ENCODE measurements at regions of chr17 and their contacts with region 1.

Region 1: DNA sequence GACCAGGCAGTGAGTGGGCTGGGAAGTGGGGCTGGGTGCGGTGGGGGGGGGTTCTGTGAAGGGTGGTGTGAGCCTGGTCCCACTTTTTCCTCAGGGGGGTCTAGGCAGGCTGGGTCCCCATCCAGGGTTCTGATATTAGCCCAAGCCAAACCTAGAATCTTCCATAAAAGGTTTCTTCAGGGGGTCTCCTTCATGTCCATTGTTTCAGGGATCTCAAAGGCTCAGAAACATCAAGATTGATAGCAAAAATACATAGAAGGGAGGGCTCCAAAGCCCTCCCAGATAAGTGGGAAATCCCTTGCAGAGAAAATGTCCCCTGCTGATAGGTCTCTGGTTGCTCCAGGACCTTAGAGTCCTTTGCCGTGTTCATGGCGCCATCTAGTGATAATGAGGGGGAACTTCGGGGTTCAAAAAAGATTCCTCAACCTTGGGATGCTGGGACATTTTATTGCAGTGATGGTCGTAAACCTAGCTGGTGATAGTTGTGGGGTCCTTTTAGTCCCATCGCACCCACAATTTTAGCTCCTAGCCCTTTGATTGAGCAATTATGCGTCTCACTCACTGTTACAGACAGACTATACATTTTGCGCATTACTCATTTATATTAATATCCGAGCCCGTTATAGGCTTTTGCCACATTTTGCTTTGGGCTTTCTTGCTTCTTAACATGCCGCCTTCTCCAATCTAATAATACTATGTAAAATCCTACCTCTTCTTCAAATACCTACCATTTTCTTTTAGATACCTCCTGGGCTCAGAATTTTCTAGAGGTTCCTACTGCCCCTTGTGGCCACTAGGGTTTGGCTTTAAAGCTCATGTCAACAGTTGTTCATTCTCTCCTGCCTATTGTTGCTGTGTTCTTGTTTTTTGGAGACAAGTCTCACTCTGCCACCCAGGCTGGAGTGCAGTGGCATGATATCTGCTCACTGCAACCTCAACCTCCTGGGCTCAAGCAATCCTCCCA is 35.1 kb downstream of the IGF2BP1 start:
- DNase-seq: peak in 1 of 2 donors; percentile 33
- ATAC-seq: peak in 7 of 8 donors; percentile 53 to 74 (median 67)
- H3K4me3 ChIP-seq: no peak overlapping the region
- H3K27ac ChIP-seq: no peak overlapping the region
- H3K4me1 ChIP-seq: peaks cover 0 to 10% (median 0%) of the 10 kb centered on the region in 9 donors
- H3K27me3 ChIP-seq: peaks cover 0 to 44% (median 29%) of the 10 kb centered on the region in 7 donors
- CTCF ChIP-seq: peak; percentile 58 to 82 (median 74)

Region 2: DNA sequence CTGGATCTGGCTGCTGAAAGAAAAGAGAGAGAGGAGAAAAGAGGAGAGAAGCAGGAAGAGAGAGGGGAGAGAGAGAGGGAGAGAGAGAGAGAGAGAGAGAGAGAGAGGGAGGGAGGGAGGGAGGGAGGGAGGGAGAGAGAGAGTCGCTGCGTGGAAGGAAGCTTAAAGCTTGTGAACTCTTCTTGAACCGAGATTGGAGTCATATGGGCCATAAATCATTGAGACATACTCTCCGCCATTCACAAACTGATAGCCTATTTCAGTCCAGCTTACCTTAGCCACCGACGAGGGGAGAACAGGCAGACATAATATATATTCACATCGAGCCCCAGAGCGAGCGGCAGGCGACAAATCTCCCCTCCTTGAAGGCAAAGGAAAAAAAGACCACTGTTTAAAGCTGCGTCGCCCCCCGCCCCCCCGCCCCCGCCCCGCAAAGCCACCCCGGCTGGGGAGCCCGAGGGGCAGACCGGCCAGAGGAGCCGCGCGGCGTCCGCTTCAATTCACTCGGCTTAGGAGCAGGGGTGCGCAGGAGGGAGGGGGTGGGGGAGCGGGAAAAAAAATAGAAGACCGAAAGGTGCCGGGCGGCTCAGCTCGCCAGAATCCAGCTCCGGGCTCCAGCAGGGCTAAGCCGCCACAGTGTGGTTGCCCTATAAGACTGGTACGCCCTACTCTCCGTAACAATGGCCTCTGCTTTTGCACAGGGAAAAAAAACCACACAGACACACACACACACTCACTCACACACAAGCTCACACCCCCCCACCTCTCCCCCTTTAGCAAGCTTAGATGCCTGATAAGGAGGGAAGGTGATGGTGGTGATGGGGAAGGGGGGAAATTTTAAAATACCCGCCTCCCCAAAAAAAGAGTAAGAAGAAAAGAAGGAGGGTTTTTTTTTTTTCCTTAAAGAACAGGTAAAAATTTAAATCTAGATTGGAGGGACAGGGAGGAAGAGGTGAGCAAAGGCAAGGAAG is 476.7 kb before region 1 on chr17:
- intact Hi-C with region 1: no loop called
- DNase-seq: no peak
- ATAC-seq: peak in 2 of 8 donors; percentile 13 to 47
- H3K4me3 ChIP-seq: peak overlapping the region in 9 of 10 donors; percentile 25 to 54 (median 43)
- H3K27ac ChIP-seq: peak overlapping the region in 6 of 10 donors; percentile 21 to 64 (median 50)
- H3K4me1 ChIP-seq: peaks cover 0 to 26% (median 0%) of the 10 kb centered on the region in 9 donors
- H3K27me3 ChIP-seq: peaks cover 0 to 100% (median 93%) of the 10 kb centered on the region in 7 donors
- CTCF ChIP-seq: no peak

Region 3: DNA sequence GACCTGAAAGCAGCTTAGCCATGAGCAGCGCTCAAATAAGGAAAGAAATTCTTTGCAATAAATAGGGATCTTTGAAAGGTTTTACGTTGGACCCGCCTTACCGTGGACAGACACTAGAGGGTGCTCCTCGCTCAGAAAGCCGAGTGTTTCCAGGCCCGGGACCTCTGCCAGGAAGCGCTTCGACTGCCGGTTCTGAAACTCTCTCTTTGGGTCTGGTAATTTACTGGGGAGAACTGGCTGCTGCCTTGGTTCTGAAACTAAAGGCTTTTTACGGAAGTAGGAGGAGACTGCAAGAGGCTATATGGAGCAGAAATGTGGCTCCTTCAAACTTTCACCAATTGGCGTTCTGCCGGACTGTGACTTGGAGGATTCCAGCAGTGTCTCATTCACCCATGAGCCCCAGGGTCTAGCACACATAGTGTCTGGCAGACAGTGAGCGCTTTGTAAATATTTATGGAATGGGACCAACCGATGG is 360.5 kb before region 1 on chr17:
- intact Hi-C with region 1: loop called in 7 of 10 experiments (anchors 5 to 10 kb)
- DNase-seq: peak; percentile 79 to 80
- ATAC-seq: peak in 7 of 8 donors; percentile 61 to 79 (median 72)
- H3K4me3 ChIP-seq: peak overlapping the region in 7 of 10 donors; percentile 33 to 46 (median 40)
- H3K27ac ChIP-seq: no peak overlapping the region
- H3K4me1 ChIP-seq: peaks cover 0 to 13% (median 5%) of the 10 kb centered on the region in 9 donors
- H3K27me3 ChIP-seq: peaks cover 0 to 92% (median 78%) of the 10 kb centered on the region in 7 donors
- CTCF ChIP-seq: peak; percentile 82 to 95 (median 89)

Region 4: GRCh38 chr17:48678141-48678971 is 353.9 kb before region 1 on chr17:
- intact Hi-C with region 1: loop called in 7 of 10 experiments (anchors 5 to 10 kb)
- DNase-seq: peak; percentile 31 to 69
- ATAC-seq: peak; percentile 65 to 84 (median 74)
- H3K4me3 ChIP-seq: peak overlapping the region in 1 of 10 donors; percentile 5
- H3K27ac ChIP-seq: no peak overlapping the region
- H3K4me1 ChIP-seq: peaks cover 0 to 6% (median 4%) of the 10 kb centered on the region in 9 donors
- H3K27me3 ChIP-seq: peaks cover 4 to 97% (median 81%) of the 10 kb centered on the region in 7 donors
- CTCF ChIP-seq: peak; percentile 79 to 98 (median 91)

Region 5: DNA sequence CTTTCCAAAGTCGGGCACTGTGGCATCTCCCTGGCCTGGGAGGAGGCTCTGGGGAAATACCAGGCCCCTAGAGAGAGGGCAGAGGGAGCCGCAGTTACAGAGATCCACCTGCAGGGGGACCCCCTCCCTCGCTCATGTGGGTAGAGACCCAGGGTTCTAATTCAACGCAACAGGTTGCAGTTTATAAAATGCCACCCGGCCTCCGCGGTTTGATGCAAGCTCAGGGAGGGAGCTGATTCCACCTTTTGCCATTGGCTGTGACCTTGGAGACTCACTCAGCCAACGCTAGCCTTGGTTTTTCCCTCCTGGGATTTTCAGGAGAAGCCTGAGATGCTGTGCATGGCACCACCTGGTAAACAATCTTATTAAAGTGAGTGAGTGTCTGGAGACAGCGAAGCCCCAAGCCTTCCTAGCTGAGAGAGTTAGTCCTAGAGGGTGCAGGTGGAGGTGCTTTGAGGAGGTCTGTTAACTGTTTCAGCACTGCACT is 227.3 kb before region 1 on chr17:
- intact Hi-C with region 1: loop called in 5 of 10 experiments (anchors 5 to 10 kb)
- DNase-seq: peak; percentile 41 to 62
- ATAC-seq: peak in 7 of 8 donors; percentile 43 to 88 (median 84)
- H3K4me3 ChIP-seq: no peak overlapping the region
- H3K27ac ChIP-seq: no peak overlapping the region
- H3K4me1 ChIP-seq: peaks cover 0 to 25% (median 7%) of the 10 kb centered on the region in 9 donors
- H3K27me3 ChIP-seq: peaks cover 0 to 20% (median 8%) of the 10 kb centered on the region in 7 donors
- CTCF ChIP-seq: peak; percentile 84 to 94 (median 91)

Region 6: GRCh38 chr17:48816774-48817590 is 215.3 kb before region 1 on chr17 and contains the start of gene TTLL6:
- intact Hi-C with region 1: loop called in 3 of 10 experiments (anchors 5 to 10 kb)
- DNase-seq: peak; percentile 84 to 85
- ATAC-seq: peak; percentile 98 to 100 (median 98)
- H3K4me3 ChIP-seq: peak within 1 kb of the TSS in 9 of 10 donors; percentile 37 to 58 (median 49)
- H3K27ac ChIP-seq: no peak within 1 kb of the TSS
- H3K4me1 ChIP-seq: peaks cover 0 to 17% (median 11%) of the 10 kb centered on the region in 9 donors
- H3K27me3 ChIP-seq: peaks cover 0 to 67% (median 6%) of the 10 kb centered on the region in 7 donors
- CTCF ChIP-seq: no peak
- total RNA-seq, gene TTLL6: 0.08 to 0.33 TPM in 2 of 10 donors, not detected in the others

Region 7: DNA sequence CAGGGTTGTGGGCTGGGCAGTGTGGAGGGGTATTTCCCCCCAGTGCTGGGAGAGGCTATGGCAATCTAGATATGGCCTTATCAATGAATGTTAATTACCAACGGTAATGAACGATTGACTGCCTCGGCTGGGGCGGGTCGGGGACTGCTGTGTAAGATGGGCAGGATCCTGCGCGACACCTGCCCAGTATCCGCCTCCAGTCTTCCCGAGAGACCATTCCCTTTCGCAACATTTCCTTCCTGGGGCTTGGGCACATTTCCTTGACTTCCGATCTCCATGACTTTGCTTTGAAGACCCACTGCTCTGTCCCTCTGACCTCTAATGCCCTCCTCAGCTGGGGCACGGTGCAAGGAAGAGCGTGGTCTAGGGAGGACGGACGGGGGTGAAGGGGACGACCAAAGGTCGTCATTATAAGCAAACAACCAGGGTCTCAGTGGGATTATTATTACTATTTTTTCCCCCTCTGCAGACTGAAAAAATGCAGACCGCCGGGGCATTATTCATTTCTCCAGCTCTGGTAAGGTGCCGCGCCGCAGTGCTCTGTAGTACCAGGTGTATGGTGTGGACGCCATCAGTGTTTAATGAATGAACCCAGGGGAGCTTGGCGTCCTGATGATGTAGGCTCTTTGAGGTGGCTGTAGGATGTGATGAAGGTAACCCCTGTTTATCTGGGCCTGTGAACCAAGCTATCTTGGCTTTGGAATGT is 139.2 kb before region 1 on chr17:
- intact Hi-C with region 1: loop called in 4 of 10 experiments (anchors 10 kb)
- DNase-seq: peak in 1 of 2 donors; percentile 25
- ATAC-seq: peak in 2 of 8 donors; percentile 3 to 27
- H3K4me3 ChIP-seq: peak overlapping the region; percentile 70 to 91 (median 77)
- H3K27ac ChIP-seq: peak overlapping the region; percentile 57 to 93 (median 88)
- H3K4me1 ChIP-seq: peaks cover 0 to 29% (median 24%) of the 10 kb centered on the region in 9 donors
- H3K27me3 ChIP-seq: no peaks in the 10 kb centered on the region
- CTCF ChIP-seq: no peak

Region 8: DNA sequence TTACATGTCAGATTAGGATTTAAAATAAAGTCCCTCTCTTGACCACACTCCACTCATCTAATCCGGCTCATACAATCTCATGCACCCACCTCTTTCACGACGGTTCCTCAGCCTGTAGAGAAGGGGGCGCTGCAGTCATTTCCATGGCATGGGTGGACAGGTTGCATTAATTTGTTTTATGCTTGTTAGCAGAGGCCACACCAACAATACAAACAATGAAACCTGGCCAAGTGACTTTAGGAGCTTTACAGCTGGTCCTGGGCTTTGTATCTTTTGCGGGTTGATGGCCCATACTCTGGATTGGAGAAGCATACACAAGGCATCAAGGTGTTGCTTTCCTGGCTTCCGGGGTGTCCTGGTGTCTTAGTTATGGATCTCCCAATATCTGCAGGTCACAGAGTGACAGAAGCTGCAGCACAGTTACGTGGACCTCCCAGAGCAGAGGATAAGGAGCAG is 77.9 kb before region 1 on chr17:
- intact Hi-C with region 1: loop called in 1 of 10 experiments (anchors 10 kb)
- DNase-seq: no peak
- ATAC-seq: no peak
- H3K4me3 ChIP-seq: no peak overlapping the region
- H3K27ac ChIP-seq: no peak overlapping the region
- H3K4me1 ChIP-seq: no peaks in the 10 kb centered on the region
- H3K27me3 ChIP-seq: peaks cover 0 to 82% (median 69%) of the 10 kb centered on the region in 7 donors
- CTCF ChIP-seq: peak in 3 of 9 donors; percentile 6 to 20 (median 14)